GM12878 (cell line): ENCODE measurements at regions of chr7 and their contacts with region 1.

Region 1: GRCh38 chr7:129298268-129298893 is 73.6 kb downstream of the AHCYL2 start:
- DNase-seq: no peak
- ATAC-seq: peak; percentile 48; the same call in 2 of the 3 replicates
- H3K4me3 ChIP-seq: no peak overlapping the region
- H3K27ac ChIP-seq: no peak overlapping the region
- H3K4me1 ChIP-seq: no peaks in the 10 kb centered on the region
- H3K27me3 ChIP-seq: no peaks in the 10 kb centered on the region
- CTCF ChIP-seq: peak; percentile 71 to 76 (median 76)
- EP300 ChIP-seq: no peak
- POLR2A ChIP-seq: no peak
- RAD21 ChIP-seq: peak; percentile 78

Region 2: GRCh38 chr7:129224251-129225205 is 73.9 kb before region 1 on chr7 and contains the start of gene AHCYL2:
- CTCF ChIA-PET with region 1: interaction called, 185 read pairs
- POLR2A ChIA-PET with region 1: no interaction called
- RAD21 ChIA-PET with region 1: interaction called, 9 read pairs
- SMC1A ChIA-PET with region 1: interaction called, 103 read pairs
- in situ Hi-C with region 1: loop called (anchors 5 kb)
- intact Hi-C with region 1: no loop called
- DNase-seq: peak; percentile 89
- ATAC-seq: peak; percentile 97
- H3K4me3 ChIP-seq: peak within 1 kb of the TSS; percentile 72
- H3K27ac ChIP-seq: peak within 1 kb of the TSS; percentile 71
- H3K4me1 ChIP-seq: peaks cover 8% of the 10 kb centered on the region; the same call in 1 of the 2 replicates
- H3K27me3 ChIP-seq: no peaks in the 10 kb centered on the region
- CTCF ChIP-seq: no peak
- EP300 ChIP-seq: no peak
- POLR2A ChIP-seq: peak; percentile 90
- RAD21 ChIP-seq: no peak
- polyA plus RNA-seq, gene AHCYL2: 1.7 to 2.0 TPM

Region 3: GRCh38 chr7:129231666-129232065 is 66.7 kb before region 1 on chr7:
- CTCF ChIA-PET with region 1: interaction called, 8 read pairs
- POLR2A ChIA-PET with region 1: no interaction called
- RAD21 ChIA-PET with region 1: interaction called, 4 read pairs
- SMC1A ChIA-PET with region 1: interaction called, 29 read pairs
- in situ Hi-C with region 1: no loop called
- intact Hi-C with region 1: no loop called
- DNase-seq: no peak
- ATAC-seq: no peak
- H3K4me3 ChIP-seq: no peak overlapping the region
- H3K27ac ChIP-seq: no peak overlapping the region
- H3K4me1 ChIP-seq: peaks cover 5% of the 10 kb centered on the region; the same call in 1 of the 2 replicates
- H3K27me3 ChIP-seq: no peaks in the 10 kb centered on the region
- CTCF ChIP-seq: no peak
- EP300 ChIP-seq: no peak
- POLR2A ChIP-seq: no peak
- RAD21 ChIP-seq: no peak

Region 4: GRCh38 chr7:129271500-129272355 is 26.7 kb before region 1 on chr7:
- CTCF ChIA-PET with region 1: interaction called, 20 read pairs
- POLR2A ChIA-PET with region 1: no interaction called
- RAD21 ChIA-PET with region 1: no interaction called
- SMC1A ChIA-PET with region 1: interaction called, 7 read pairs
- in situ Hi-C with region 1: no loop called
- intact Hi-C with region 1: no loop called
- DNase-seq: peak; percentile 21
- ATAC-seq: peak; percentile 98
- H3K4me3 ChIP-seq: no peak overlapping the region
- H3K27ac ChIP-seq: no peak overlapping the region
- H3K4me1 ChIP-seq: peaks cover 6% of the 10 kb centered on the region; the same call in 1 of the 2 replicates
- H3K27me3 ChIP-seq: no peaks in the 10 kb centered on the region
- CTCF ChIP-seq: peak; percentile 73 to 83 (median 74)
- EP300 ChIP-seq: no peak
- POLR2A ChIP-seq: no peak
- RAD21 ChIP-seq: peak; percentile 85

Region 5: DNA sequence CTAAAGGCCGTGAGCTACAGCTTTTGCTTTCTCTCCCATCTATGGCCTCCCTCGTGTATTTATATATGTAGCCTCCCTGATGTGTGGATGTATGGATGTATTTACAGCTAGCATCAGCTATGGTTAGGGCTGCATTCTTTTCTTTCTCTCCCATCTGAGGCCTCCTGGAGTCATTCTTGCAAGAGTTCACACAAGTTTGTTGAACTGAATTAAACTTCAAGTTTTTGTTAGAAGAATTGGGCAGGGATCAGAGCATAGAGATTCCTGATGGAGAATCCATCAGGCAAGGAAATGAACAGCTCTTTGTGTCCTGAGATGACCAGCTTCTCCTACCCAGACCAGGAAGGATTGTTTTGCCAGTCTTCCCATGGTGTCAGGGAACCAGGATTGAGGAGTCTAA is 13.3 kb before region 1 on chr7:
- CTCF ChIA-PET with region 1: interaction called, 14 read pairs
- POLR2A ChIA-PET with region 1: no interaction called
- RAD21 ChIA-PET with region 1: interaction called, 3 read pairs
- SMC1A ChIA-PET with region 1: interaction called, 14 read pairs
- in situ Hi-C with region 1: no loop called
- intact Hi-C with region 1: no loop called
- DNase-seq: no peak
- ATAC-seq: no peak
- H3K4me3 ChIP-seq: no peak overlapping the region
- H3K27ac ChIP-seq: no peak overlapping the region
- H3K4me1 ChIP-seq: no peaks in the 10 kb centered on the region
- H3K27me3 ChIP-seq: no peaks in the 10 kb centered on the region
- CTCF ChIP-seq: no peak
- EP300 ChIP-seq: no peak
- POLR2A ChIP-seq: no peak
- RAD21 ChIP-seq: no peak